Naive thymus-derived CD8-positive, alpha-beta T cell (primary cell): ENCODE measurements at regions of chr6 and their contacts with region 1.

Region 1: DNA sequence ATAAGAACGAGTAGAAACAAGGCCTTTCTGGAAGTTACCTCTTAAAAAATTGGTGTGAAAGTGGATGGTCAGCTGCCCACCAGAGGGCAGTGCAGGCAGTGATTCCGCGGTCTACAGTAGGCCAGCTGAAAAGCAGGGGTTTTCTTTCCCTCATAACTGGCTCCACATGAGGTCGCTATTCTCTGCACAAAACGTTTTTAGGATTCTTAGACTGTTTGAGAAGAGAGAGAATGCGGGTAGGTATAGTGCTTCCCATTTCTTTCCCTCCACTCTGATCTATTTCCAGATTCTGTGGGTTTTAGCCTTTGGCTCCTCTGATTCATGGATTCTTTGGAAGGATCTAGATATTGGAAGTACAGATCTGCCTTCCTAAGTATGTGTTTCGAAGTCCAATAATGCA is 14.2 kb downstream of the FIG4 start:
- DNase-seq: peak; percentile 54 to 86 (median 73)
- ATAC-seq: peak; percentile 98 to 99
- H3K4me3 Mint-ChIP-seq: peak overlapping the region in 1 of 10 donors; percentile 20
- H3K27ac Mint-ChIP-seq: peak overlapping the region in 3 of 10 donors; percentile 28 to 79 (median 46)
- H3K4me1 Mint-ChIP-seq: peaks cover 22 to 67% (median 30%) of the 10 kb centered on the region in 4 donors
- H3K27me3 Mint-ChIP-seq: no peaks in the 10 kb centered on the region

Region 2: GRCh38 chr6:109671733-109672132 is 33.5 kb before region 1 on chr6:
- POLR2A ChIA-PET with region 1: no interaction called
- DNase-seq: no peak
- ATAC-seq: no peak
- H3K4me3 Mint-ChIP-seq: no peak overlapping the region
- H3K27ac Mint-ChIP-seq: peak overlapping the region in 1 of 10 donors; percentile 8
- H3K4me1 Mint-ChIP-seq: no peaks in the 10 kb centered on the region
- H3K27me3 Mint-ChIP-seq: no peaks in the 10 kb centered on the region

Region 3: GRCh38 chr6:109690737-109691621 is 14.3 kb before region 1 on chr6 and contains the starts of genes AK9 and FIG4:
- POLR2A ChIA-PET with region 1: interaction called, 11 read pairs
- DNase-seq: peak; percentile 78 to 93 (median 85)
- ATAC-seq: peak; percentile 94 to 95
- H3K4me3 Mint-ChIP-seq: peak within 1 kb of the TSS; percentile 88 to 99 (median 96)
- H3K27ac Mint-ChIP-seq: peak within 1 kb of the TSS; percentile 92 to 99 (median 97)
- H3K4me1 Mint-ChIP-seq: peaks cover 10 to 43% (median 33%) of the 10 kb centered on the region in 4 donors
- H3K27me3 Mint-ChIP-seq: no peaks in the 10 kb centered on the region
- polyA plus RNA-seq, gene AK9: 4.3 to 7.4 (median 5.9) TPM
- polyA plus RNA-seq, gene FIG4: 14.1 to 18.7 (median 16.7) TPM

Region 4: DNA sequence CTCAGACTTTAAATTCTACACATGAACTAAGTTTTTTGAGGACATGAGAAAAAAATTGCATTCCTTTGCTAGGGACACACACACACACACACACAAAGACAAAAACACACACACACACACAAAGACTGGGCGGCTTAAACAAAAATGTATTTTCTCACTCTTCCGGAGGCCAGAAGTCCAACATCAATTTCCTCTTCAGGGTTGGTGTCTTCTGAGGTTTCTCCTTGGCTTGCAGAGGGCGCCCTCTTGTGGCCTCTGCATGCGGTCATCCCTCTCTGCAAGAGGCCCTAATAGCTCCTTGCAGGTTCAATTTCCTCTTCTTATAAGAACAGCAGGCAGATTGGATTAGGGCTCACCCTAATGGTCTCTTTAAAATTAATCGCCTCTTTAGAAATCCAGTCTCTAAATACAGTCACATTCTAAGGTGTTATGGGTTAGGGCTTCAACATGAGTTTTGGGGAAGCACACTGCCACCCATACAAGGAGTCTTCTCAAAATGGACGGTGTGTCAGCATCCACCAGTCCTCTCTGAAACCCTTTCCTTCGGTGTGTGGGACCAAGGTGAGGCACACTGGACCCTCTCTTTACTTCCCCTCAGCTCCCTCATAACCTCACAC is 334.2 kb after region 1 on chr6:
- POLR2A ChIA-PET with region 1: interaction called, 20 read pairs
- DNase-seq: peak; percentile 65 to 90 (median 80)
- ATAC-seq: peak; percentile 78 to 84
- H3K4me3 Mint-ChIP-seq: peak overlapping the region; percentile 89 to 97 (median 92)
- H3K27ac Mint-ChIP-seq: peak overlapping the region; percentile 86 to 98 (median 94)
- H3K4me1 Mint-ChIP-seq: peaks cover 12 to 35% (median 19%) of the 10 kb centered on the region in 4 donors
- H3K27me3 Mint-ChIP-seq: no peaks in the 10 kb centered on the region